Heart left ventricle (tissue), 16 donors: ENCODE measurements at regions of chr9 and their contacts with region 1.

Region 1: DNA sequence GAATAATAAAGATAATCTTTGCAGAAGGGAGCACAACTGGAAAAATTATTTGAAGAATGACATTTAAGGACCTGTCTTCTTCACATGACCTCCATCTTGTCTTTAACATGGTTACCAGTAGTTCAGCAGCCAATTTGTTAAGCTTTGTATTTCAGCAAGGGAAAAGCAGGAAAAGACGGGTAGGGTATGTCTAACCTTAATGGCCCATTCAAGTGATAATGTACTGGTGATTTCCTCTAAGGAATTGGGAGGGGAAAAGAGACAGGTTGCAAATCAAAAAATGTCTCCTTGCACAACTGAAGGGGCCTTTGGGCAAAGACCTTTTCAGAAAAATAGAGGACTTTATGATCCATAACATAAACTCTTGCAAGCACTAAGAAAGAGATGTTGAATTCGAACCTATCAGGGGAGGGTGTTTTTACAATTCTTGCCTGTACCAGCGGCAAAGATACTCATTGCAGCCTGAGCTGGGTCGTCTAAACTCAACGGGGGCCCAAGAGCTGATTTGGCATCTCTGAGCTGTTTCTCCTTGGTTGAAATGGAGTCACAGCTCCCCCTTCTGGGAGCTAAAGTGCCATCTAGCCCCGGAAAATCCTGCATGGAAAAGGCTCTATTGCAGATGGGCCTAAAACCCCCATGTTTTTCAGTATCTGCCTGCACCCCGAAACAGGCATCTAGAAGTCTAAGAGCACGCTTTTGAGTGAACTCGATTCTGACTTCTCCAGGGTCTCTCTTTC is 3.8 kb downstream of the BRINP1 start:
- DNase-seq: no peak
- ATAC-seq: no peak
- H3K4me3 ChIP-seq: no peak overlapping the region
- H3K27ac ChIP-seq: no peak overlapping the region
- H3K4me1 ChIP-seq: peaks cover 0 to 13% (median 0%) of the 10 kb centered on the region in 12 donors
- H3K27me3 ChIP-seq: peaks cover 0 to 34% (median 29%) of the 10 kb centered on the region in 9 donors
- CTCF ChIP-seq: peak in 11 of 12 donors; percentile 22 to 64 (median 48)
- POLR2A ChIP-seq: no peak

Region 2: GRCh38 chr9:117644133-117644931 is 1721.1 kb before region 1 on chr9:
- intact Hi-C with region 1: loop called in 2 of 10 experiments (anchors 10 kb)
- DNase-seq: peak; percentile 51 to 83 (median 66)
- ATAC-seq: peak; percentile 47 to 82 (median 76)
- H3K4me3 ChIP-seq: peak overlapping the region in 9 of 12 donors; percentile 9 to 50 (median 36)
- H3K27ac ChIP-seq: peak overlapping the region in 8 of 12 donors; percentile 7 to 59 (median 38)
- H3K4me1 ChIP-seq: peaks cover 0 to 23% (median 4%) of the 10 kb centered on the region in 12 donors
- H3K27me3 ChIP-seq: peaks cover 0 to 48% (median 6%) of the 10 kb centered on the region in 9 donors
- CTCF ChIP-seq: peak in 11 of 12 donors; percentile 92 to 99 (median 96)
- POLR2A ChIP-seq: no peak

Region 3: GRCh38 chr9:118170032-118170955 is 1195.2 kb before region 1 on chr9:
- intact Hi-C with region 1: loop called in 2 of 10 experiments (anchors 5 to 10 kb)
- DNase-seq: peak in 4 of 5 donors; percentile 20 to 29 (median 23)
- ATAC-seq: peak in 3 of 4 donors; percentile 67 to 83 (median 77)
- H3K4me3 ChIP-seq: no peak overlapping the region
- H3K27ac ChIP-seq: no peak overlapping the region
- H3K4me1 ChIP-seq: no peaks in the 10 kb centered on the region
- H3K27me3 ChIP-seq: peaks cover 0 to 27% (median 0%) of the 10 kb centered on the region in 9 donors
- CTCF ChIP-seq: peak; percentile 38 to 76 (median 54)
- POLR2A ChIP-seq: no peak

Region 4: GRCh38 chr9:118595719-118596305 is 769.6 kb before region 1 on chr9:
- intact Hi-C with region 1: loop called in 3 of 10 experiments (anchors 5 to 10 kb)
- DNase-seq: peak in 1 of 5 donors; percentile 8
- ATAC-seq: peak in 3 of 4 donors; percentile 48 to 68 (median 64)
- H3K4me3 ChIP-seq: no peak overlapping the region
- H3K27ac ChIP-seq: no peak overlapping the region
- H3K4me1 ChIP-seq: no peaks in the 10 kb centered on the region
- H3K27me3 ChIP-seq: no peaks in the 10 kb centered on the region
- CTCF ChIP-seq: peak in 9 of 12 donors; percentile 5 to 46 (median 35)
- POLR2A ChIP-seq: no peak

Region 5: DNA sequence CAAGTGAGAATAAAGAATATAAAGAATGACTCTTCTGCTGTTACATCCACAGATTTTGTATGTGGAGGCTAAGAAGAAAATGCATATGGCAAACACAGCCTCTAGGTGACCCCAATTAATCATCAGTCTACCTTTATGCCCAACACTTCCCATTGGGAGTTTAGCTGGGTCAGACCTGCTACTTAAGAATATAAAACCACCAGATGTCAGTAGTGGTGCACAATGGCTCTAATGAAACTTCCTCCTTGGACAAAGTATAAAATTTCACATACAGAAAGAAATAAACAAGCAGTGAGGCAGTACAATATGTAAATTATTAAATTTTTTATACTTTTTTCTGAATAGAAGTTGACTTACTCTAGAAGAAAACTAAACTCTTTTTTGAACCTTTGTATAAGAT is 536.1 kb before region 1 on chr9:
- intact Hi-C with region 1: loop called in 9 of 10 experiments (anchors 1 to 10 kb)
- DNase-seq: no peak
- ATAC-seq: peak in 1 of 4 donors; percentile 36
- H3K4me3 ChIP-seq: no peak overlapping the region
- H3K27ac ChIP-seq: no peak overlapping the region
- H3K4me1 ChIP-seq: no peaks in the 10 kb centered on the region
- H3K27me3 ChIP-seq: no peaks in the 10 kb centered on the region
- CTCF ChIP-seq: peak; percentile 14 to 75 (median 52)
- POLR2A ChIP-seq: no peak

Region 6: GRCh38 chr9:118992813-118993794 is 372.4 kb before region 1 on chr9:
- intact Hi-C with region 1: loop called in 1 of 10 experiments (anchors 10 kb)
- DNase-seq: no peak
- ATAC-seq: peak in 1 of 4 donors; percentile 43
- H3K4me3 ChIP-seq: no peak overlapping the region
- H3K27ac ChIP-seq: no peak overlapping the region
- H3K4me1 ChIP-seq: peaks cover 0 to 21% (median 0%) of the 10 kb centered on the region in 12 donors
- H3K27me3 ChIP-seq: no peaks in the 10 kb centered on the region
- CTCF ChIP-seq: peak in 3 of 12 donors; percentile 11 to 25 (median 15)
- POLR2A ChIP-seq: no peak